ENCODE measurements at regions of chr19 and their contacts with region 1.

Region 1: DNA sequence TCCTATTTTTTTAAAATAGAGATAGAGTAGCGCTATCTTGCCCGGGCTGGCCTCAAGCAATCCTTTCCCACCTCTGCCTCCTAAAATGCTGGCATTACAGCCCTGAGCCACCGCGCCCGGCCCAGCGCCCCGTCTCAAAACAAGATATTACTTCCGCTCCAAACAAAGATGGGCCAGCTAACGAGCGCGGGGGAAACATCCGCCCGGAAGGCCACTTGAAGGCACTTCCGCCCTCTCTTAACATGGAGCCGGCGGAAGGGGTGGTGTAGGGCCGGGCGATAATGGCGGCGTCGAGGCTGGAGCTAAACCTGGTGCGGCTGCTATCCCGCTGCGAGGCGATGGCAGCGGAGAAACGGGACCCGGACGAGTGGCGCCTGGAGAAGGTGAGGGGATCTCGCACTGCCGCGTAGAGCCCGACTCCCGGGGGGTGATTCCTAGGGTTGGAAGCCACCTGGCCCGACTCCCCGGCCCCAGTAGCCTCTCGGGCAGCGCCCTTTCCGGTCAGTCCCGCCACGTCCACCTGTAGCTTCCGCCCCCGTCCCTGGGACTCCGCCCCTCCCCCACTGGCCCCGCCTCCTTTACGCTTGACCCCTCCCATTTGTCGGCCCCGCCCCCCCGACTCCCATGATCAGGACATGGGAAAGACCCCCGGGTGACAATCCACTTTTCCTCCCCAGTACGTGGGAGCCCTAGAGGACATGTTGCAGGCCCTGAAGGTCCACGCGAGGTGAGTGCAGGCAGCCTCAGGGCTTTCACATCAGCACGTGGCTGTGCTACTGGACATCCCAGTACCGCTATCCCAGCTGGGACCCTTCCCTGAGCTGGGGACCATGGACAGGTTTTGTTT is at the start of gene USE1:
- DNase-seq: peak; percentile 82 to 85
- H3K4me3 ChIP-seq: peak within 1 kb of the TSS; percentile 64
- H3K27ac ChIP-seq: peak within 1 kb of the TSS; percentile 84
- H3K4me1 ChIP-seq: peaks cover 22% of the 10 kb centered on the region
- H3K27me3 ChIP-seq: no peaks in the 10 kb centered on the region
- CTCF ChIP-seq: no peak
- total RNA-seq, gene USE1: 19.8 and 22.5 TPM in 2 replicates

Region 2: DNA sequence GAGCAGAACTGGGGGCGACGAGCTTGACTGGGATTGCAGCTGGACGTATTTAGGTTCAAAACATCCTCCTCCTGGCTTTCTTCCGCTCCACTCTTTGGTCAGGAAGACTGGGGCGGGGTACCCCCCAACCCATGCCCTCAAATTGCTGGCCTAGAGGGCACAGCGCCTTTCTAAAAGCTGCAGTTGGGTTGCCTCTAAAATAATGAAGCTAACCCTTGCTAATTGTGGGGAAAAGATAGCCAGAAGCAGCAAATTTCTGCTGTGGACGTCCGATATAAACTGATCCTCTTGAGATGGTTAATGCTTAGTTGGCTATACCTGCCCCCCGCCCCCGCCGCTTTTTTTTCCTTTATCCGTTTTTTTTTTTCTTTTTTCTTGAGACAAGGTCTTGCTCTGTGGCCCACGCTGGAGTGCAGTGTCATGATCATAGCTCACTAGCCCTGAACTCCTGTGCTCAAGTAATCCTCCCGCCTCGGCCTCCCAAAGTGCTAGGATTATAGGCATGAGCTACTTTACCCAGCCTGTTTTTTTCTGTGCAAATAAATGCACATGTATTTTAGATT is 672.4 kb before region 1 on chr19:
- CTCF ChIA-PET with region 1: no interaction called
- POLR2A ChIA-PET with region 1: no interaction called
- intact Hi-C with region 1: no loop called
- DNase-seq: no peak
- H3K4me3 ChIP-seq: peak overlapping the region; percentile 95
- H3K27ac ChIP-seq: peak overlapping the region; percentile 40
- H3K4me1 ChIP-seq: peaks cover 17% of the 10 kb centered on the region
- H3K27me3 ChIP-seq: no peaks in the 10 kb centered on the region
- CTCF ChIP-seq: no peak

Region 3: GRCh38 chr19:16566161-16566560 is 649.2 kb before region 1 on chr19:
- CTCF ChIA-PET with region 1: no interaction called
- POLR2A ChIA-PET with region 1: no interaction called
- intact Hi-C with region 1: no loop called
- DNase-seq: no peak
- H3K4me3 ChIP-seq: no peak overlapping the region
- H3K27ac ChIP-seq: no peak overlapping the region
- H3K4me1 ChIP-seq: peaks cover 44% of the 10 kb centered on the region
- H3K27me3 ChIP-seq: no peaks in the 10 kb centered on the region
- CTCF ChIP-seq: no peak

Region 4: GRCh38 chr19:16688084-16688483 is 527.3 kb before region 1 on chr19:
- CTCF ChIA-PET with region 1: no interaction called
- POLR2A ChIA-PET with region 1: interaction called, 19 read pairs
- intact Hi-C with region 1: no loop called
- DNase-seq: no peak
- H3K4me3 ChIP-seq: no peak overlapping the region
- H3K27ac ChIP-seq: no peak overlapping the region
- H3K4me1 ChIP-seq: peaks cover 14% of the 10 kb centered on the region
- H3K27me3 ChIP-seq: no peaks in the 10 kb centered on the region
- CTCF ChIP-seq: no peak

Region 5: DNA sequence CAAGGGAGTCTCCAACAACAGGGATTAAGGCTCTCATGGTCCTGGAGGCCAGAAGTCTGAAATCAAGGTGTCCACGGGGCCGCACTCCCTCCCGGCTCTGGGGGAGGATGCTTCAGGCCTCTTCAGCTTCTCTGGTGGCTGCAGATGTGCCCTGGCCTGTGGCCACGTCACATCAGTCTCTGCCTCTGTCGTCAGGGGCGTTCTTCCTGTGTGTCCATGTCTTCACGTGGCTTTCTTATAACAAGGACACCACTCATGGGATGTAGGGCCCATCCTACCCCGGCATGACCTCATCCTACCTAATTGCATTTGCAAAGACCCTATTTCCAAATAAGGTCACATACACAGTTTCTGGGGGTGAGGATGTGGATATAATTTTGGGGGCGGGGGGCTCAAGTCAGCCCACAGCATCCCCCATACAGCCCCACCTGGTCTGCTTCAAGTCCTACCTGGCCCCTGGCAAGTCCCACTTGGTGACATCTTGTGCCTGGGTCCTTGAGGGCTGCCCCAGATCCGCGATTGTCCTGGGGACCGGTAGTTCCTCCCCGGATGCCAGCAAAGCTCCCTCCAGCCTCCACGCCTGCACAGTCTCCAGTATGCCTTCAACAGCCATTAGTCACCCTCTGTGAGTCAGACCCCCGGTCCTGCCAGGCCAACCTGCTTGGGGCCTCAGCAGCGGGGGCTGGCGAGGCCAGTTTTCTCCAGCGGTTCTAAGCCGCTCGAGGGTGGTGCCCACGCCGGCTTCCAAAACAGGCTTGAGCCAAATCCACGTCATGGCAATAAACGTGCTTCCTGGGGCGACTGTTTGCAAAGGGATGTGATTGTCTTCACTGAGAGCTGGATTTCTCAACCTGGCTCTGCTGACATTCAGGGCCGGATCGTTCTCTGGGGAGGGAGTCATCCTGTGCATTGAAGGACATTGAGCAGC is 107.6 kb before region 1 on chr19:
- CTCF ChIA-PET with region 1: no interaction called
- POLR2A ChIA-PET with region 1: no interaction called
- intact Hi-C with region 1: no loop called
- DNase-seq: peak; percentile 94 to 99
- H3K4me3 ChIP-seq: no peak overlapping the region; the same call in 1 of the 2 replicates
- H3K27ac ChIP-seq: peak overlapping the region; percentile 68
- H3K4me1 ChIP-seq: peaks cover 24% of the 10 kb centered on the region
- H3K27me3 ChIP-seq: no peaks in the 10 kb centered on the region
- CTCF ChIP-seq: no peak

Region 6: GRCh38 chr19:17195106-17195505 is 20.2 kb before region 1 on chr19:
- CTCF ChIA-PET with region 1: no interaction called
- POLR2A ChIA-PET with region 1: no interaction called
- intact Hi-C with region 1: no loop called
- DNase-seq: no peak
- H3K4me3 ChIP-seq: no peak overlapping the region
- H3K27ac ChIP-seq: no peak overlapping the region
- H3K4me1 ChIP-seq: no peaks in the 10 kb centered on the region
- H3K27me3 ChIP-seq: no peaks in the 10 kb centered on the region
- CTCF ChIP-seq: no peak

Region 7: DNA sequence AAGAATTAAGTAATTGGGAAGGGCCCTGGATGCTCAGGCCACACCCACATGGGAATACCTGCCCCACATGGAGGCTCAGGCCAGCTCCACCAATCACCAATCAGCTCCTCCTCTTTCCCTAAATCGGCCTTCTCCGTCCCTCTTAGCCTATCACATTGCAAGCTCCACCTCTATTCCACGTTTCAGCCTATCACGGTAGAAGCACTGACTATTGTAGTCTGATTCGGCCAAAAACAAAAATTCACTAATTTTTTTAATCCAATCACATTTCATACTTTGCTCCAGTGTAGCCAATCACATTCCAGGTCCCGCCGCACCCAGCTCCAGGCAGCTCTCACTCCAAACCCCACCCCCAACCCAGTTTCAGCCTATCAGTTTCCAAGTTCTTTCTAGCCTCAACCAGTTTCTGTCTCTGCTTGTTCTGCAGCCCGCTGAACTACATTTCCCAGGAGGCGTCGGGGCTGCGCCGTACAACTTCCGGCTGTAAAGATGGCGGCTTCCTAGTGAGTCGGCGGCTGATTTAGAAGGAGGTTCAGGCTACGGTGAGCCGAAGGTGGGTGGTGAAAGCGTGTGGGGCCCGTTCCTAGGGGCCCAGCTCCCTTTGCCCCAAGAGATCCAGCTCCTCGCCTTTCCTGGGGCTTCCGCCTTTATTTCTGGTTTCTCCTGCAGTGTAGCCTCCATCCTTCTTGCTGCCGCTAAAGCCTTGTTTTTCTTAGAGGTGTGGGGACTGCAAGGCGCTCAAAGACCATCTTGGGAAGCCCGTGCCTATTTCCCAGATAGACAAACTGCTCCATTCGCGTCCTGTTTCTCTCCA is 51.8 kb after region 1 on chr19 and contains the start of gene BABAM1:
- CTCF ChIA-PET with region 1: no interaction called
- POLR2A ChIA-PET with region 1: interaction called, 14 read pairs
- intact Hi-C with region 1: no loop called
- DNase-seq: peak; percentile 94 to 99
- H3K4me3 ChIP-seq: peak within 1 kb of the TSS; percentile 86
- H3K27ac ChIP-seq: peak within 1 kb of the TSS; percentile 70
- H3K4me1 ChIP-seq: peaks cover 25% of the 10 kb centered on the region
- H3K27me3 ChIP-seq: no peaks in the 10 kb centered on the region
- CTCF ChIP-seq: no peak
- total RNA-seq, gene BABAM1: 127 and 152 TPM in 2 replicates

Region 8: DNA sequence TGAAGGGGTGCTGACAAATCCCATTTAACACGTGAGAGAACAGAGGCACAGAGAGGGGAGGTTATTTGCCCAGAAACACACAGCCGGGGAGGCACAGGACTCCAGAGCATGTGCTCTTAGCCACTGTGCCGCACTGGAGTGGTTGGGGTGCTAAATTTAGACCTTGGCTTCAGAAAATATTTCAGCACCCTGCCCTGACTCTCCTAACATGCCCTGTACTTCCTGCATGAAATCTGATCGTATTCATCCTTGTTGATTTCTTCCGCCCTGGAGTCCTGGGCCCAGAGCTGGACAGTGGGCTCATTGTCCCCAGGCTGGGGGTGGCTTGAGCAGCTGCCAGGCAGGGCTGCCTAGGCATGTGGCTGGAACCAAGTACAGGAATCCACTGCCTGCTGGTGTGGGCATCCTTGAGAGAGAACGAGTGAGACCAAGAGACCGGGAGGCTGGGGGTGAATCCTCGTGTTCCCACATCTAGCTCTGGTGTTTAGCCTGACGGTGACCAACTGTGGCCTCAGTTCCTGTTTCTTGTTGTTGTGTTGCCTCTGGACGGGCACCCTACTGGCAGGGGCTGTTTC is 260.3 kb after region 1 on chr19:
- CTCF ChIA-PET with region 1: no interaction called
- POLR2A ChIA-PET with region 1: interaction called, 26 read pairs
- intact Hi-C with region 1: no loop called
- DNase-seq: peak; percentile 65 to 76
- H3K4me3 ChIP-seq: no peak overlapping the region
- H3K27ac ChIP-seq: peak overlapping the region; percentile 38
- H3K4me1 ChIP-seq: peaks cover 30% of the 10 kb centered on the region
- H3K27me3 ChIP-seq: no peaks in the 10 kb centered on the region
- CTCF ChIP-seq: no peak

Region 9: DNA sequence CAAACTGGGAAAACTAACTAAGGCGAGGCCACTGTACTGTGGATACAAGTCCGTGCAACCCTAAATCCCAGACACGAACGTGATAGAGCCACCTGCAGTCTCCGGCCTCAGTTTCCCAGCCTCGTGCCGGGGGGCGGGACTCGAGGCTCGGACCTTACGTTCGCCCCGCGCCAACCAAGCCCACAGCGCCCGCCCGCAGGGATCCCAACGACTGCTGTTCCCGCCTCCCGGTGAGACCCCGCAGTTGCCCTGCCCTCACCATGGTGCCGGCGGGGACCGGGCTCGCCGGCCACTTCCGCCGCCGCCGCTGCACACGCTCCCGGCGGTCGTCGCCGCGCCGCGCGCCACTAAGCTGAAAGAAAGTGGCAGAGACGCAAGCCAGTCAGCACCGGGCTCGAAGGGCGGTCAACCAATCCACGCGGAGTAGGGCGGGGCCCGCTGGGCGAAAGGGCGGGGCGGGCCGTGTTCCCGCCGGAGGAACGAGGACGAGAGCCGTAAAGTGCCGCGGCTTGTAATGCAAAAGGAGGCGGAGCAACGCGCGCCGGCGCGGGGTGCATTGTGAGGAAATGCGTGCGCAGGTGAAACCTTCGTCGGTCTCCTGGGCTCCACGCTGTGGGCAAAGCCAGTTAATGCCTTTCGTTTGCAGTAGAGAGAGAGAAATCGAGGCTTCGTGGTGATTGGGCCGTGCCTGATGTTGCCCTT is 1107.6 kb after region 1 on chr19 and contains the start of gene LSM4:
- CTCF ChIA-PET with region 1: no interaction called
- POLR2A ChIA-PET with region 1: interaction called, 15 read pairs
- intact Hi-C with region 1: no loop called
- DNase-seq: peak; percentile 97 to 99
- H3K4me3 ChIP-seq: peak within 1 kb of the TSS; percentile 76
- H3K27ac ChIP-seq: peak within 1 kb of the TSS; percentile 84
- H3K4me1 ChIP-seq: peaks cover 37% of the 10 kb centered on the region
- H3K27me3 ChIP-seq: no peaks in the 10 kb centered on the region
- CTCF ChIP-seq: no peak
- total RNA-seq, gene LSM4: 291 and 323 TPM in 2 replicates

Measured in PC-9 (cell line).